ENCODE measurements at regions of chr12 and their contacts with region 1.

Region 1: GRCh38 chr12:56601503-56601902 is 28.6 kb downstream of the BAZ2A start:
- DNase-seq: peak in 1 of 2 experiments; percentile 41
- H3K4me3 ChIP-seq: no peak overlapping the region
- H3K4me1 ChIP-seq: no peaks in the 10 kb centered on the region
- H3K27me3 ChIP-seq: no peaks in the 10 kb centered on the region

Region 2: GRCh38 chr12:56243731-56244181 is 357.7 kb before region 1 on chr12:
- in situ Hi-C with region 1: no loop called
- DNase-seq: no peak
- H3K4me3 ChIP-seq: no peak overlapping the region
- H3K4me1 ChIP-seq: no peaks in the 10 kb centered on the region
- H3K27me3 ChIP-seq: no peaks in the 10 kb centered on the region

Region 3: DNA sequence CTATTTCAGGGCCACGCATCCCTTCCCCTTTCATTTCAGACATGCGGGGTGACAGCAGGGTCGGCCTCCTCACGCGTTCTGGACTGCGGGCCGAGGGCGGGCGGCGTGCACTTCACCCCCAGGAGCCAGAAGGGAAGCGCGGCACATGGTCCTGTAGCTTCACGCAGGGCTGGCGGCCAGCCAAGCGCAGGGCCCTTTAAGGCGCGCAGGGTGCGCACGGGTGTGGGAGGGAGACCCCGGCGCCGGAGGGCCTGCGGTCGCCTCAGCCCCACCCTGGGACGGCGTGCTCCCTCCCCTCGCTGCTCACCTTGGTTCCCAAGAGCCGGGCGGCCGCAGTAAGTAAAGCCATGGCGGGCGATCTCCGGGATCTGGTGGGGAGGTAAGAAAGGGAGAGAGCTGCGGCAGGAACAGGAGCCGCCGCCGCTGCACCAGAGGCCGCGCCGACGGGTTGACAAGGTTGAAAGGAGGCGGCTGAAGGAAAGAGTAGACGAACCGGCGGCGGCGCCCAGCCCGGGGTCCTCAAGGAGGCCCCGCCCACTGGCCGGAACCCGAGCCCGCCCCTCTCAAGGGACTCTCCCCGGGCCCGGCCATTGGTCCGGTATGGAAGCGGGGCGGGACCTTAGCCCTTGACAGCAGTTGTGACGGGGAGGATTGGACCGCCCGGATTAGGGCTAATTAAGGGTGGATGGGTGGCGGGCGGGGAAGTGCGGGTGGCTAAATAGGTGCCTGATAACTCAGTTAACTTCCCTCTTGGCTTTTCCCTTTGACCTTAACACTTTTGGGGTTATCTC is 301.5 kb before region 1 on chr12 and contains the start of gene CS:
- in situ Hi-C with region 1: loop called (anchors 25 kb)
- DNase-seq: peak; percentile 97 to 99
- H3K4me3 ChIP-seq: peak within 1 kb of the TSS; percentile 97
- H3K4me1 ChIP-seq: peaks cover 31% of the 10 kb centered on the region
- H3K27me3 ChIP-seq: no peaks in the 10 kb centered on the region

Region 4: DNA sequence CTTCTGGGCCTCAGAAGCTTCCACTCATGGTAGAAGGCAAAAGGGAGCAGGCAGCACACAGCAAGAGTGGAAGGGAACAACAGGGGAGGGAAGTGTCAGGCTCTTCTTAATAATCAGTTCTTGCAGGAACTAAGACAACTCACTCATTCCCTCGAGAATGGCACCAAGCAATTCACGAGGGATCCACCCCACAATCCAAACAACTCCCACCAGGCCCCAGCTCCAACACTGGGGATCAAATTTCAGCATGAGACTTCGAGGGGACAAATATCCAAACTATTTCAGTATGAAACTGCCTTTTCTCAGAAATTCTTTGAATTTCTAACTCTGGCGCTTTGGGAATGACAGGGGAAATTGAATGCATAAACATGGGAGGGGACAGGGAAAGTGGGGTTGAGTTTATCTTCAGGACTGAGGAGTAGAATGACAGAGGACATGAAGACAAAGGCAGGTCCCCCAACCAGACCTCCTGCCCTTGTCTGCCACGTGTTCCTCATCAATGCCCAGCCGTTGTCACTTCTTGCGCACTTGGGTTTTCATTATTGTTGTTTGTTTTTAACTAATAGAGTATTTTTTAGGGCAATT is 214.3 kb before region 1 on chr12:
- in situ Hi-C with region 1: no loop called
- DNase-seq: no peak
- H3K4me3 ChIP-seq: no peak overlapping the region
- H3K4me1 ChIP-seq: no peaks in the 10 kb centered on the region; the same call in 1 of the 2 replicates
- H3K27me3 ChIP-seq: no peaks in the 10 kb centered on the region